ENCODE measurements at regions of chr19 and their contacts with region 1.

Region 1: DNA sequence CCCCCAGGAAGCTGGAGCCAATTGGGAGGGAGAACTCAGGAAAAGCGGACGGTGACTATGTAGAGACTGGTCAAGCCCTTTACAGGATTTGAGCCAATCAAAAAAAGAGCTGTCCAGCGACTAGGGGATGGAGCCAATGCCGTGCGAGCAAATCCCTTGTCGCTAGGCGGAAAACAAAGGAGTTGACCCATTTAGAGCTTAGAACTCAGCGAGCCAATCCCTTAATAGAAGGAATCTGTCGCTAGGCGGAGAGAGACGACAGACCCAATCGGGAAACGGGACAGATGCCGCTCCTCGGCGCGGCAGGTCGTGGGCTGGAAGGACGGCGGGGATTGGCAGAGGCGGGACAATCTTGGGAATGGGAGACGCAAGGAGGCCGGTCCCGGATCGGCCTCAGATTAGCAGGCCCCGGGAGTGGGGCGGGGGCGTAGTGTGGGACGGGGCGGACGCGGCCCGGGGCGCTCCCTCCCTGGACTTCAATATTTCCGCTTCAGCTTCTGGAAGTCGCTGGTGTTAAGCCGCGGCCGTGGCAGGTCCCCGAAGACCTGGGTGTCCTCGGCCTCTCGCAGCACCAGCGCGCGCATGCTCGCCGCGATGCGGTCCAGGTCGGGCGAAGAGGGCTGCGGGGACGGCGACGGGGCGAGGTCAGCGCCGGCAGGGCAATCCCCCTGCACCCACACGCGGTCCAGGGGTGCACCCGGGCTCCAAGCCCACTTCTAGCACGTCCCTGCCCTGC is 2.2 kb upstream of the PNKP start:
- DNase-seq: peak; percentile 92
- H3K4me3 Mint-ChIP-seq: no peak overlapping the region
- H3K27ac Mint-ChIP-seq: peak overlapping the region; percentile 86
- H3K4me1 Mint-ChIP-seq: peaks cover 27% of the 10 kb centered on the region
- H3K27me3 Mint-ChIP-seq: no peaks in the 10 kb centered on the region

Region 2: GRCh38 chr19:49653211-49653759 is 216.3 kb before region 1 on chr19:
- intact Hi-C with region 1: no loop called
- DNase-seq: no peak
- H3K4me3 Mint-ChIP-seq: no peak overlapping the region
- H3K27ac Mint-ChIP-seq: no peak overlapping the region
- H3K4me1 Mint-ChIP-seq: no peaks in the 10 kb centered on the region
- H3K27me3 Mint-ChIP-seq: no peaks in the 10 kb centered on the region

Region 3: DNA sequence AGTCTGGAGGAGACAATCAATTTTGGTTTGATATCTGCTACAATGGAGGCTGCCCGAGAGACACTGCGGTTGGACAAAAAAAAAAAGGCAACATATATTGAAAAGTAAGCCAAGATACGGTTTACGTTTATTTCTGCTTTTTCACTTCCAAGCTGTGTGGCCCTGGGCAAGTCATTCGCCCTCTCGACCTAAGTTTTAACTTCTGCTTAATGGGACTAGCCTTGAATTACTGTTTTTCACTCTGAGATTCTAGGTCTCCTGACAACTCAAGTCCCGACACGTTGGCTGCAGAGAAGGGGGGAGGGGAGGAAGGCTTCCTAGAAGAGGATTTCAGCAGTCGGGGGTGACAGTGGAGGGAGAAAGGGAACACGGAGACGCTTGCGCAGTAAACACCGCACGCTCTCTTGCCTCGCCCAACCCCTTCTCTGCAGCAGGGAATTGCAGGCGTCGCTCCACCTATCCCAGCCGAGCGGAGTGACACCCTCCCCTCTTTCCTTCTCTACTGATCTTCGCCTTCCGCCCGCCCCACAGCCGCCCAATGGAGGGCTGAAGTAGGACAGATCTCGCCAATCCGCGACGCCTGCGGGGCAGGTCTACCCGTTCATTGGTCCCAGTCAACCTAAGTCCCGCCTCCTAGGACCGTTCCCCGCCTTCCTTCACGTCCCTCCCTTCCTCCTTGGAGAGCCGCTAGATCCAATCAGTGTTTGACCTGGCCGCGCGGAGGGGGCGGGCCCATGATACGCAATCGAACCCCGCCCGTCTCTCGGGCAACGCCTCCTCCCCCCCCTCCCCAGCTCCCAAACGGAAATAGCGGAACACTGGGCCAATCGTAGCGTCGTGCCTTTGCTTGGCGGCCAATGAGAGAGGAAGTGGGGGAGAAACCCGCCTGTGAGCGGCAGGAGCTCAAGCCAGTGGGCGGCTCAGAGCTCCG is 103.3 kb before region 1 on chr19:
- intact Hi-C with region 1: loop called (anchors 1 kb)
- DNase-seq: peak; percentile 99
- H3K4me3 Mint-ChIP-seq: peak overlapping the region; percentile 91
- H3K27ac Mint-ChIP-seq: peak overlapping the region; percentile 89
- H3K4me1 Mint-ChIP-seq: peaks cover 18% of the 10 kb centered on the region
- H3K27me3 Mint-ChIP-seq: no peaks in the 10 kb centered on the region

Region 4: DNA sequence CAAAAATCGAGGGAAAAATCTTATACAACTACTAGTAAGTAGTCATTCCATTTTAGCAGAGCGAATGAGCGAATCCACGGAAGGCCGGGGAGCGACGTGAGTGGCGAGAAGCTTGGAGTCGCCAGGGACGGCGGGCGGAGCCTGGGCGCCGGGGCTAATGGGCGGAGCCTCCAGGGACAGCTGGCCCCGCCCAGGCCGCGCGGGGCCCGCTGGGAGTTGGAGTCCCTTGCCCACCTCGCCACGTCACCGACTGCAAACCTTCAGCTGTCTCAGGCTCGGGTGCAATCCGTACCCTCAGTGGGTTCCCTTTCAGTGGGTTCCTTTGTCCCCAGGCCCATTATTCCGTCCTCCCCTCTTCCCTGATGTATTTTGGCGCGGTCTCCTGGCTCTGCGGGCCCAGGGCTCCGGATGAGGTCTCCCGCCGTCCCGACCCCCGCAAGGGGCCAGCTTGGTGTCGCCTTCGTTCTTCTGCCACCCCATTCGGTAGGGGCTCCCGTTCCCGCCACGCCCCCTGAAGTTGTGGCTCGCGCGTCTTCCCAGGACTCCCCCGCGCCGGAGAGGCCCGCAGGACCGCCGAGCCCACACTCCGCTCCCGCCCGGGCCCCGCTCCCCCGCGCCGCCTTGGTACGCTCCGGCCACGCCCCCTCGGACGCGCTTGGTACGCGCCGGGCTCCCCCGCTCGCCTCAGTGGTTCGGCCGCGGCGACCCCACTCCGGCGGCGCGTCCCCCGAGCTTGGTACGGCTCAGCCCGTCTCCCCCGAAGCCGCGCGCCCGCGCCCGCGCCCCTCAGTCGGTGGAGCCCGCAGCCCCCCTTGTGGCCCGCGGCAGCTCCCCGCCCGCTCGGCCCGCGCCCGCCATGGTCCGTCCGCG is 18.9 kb before region 1 on chr19 and contains the start of gene PTOV1:
- intact Hi-C with region 1: loop called (anchors 1 kb)
- DNase-seq: peak; percentile 84
- H3K4me3 Mint-ChIP-seq: peak within 1 kb of the TSS; percentile 89
- H3K27ac Mint-ChIP-seq: peak within 1 kb of the TSS; percentile 96
- H3K4me1 Mint-ChIP-seq: peaks cover 37% of the 10 kb centered on the region
- H3K27me3 Mint-ChIP-seq: no peaks in the 10 kb centered on the region
- total RNA-seq, gene PTOV1: 127 and 134 TPM in 2 replicates

Region 5: GRCh38 chr19:49916842-49917733 is 47.5 kb after region 1 on chr19:
- intact Hi-C with region 1: no loop called
- DNase-seq: no peak
- H3K4me3 Mint-ChIP-seq: no peak overlapping the region
- H3K27ac Mint-ChIP-seq: peak overlapping the region; percentile 26
- H3K4me1 Mint-ChIP-seq: peaks cover 36% of the 10 kb centered on the region
- H3K27me3 Mint-ChIP-seq: no peaks in the 10 kb centered on the region

Region 6: GRCh38 chr19:50025024-50025789 is 155.6 kb after region 1 on chr19 and contains the start of gene VRK3:
- intact Hi-C with region 1: loop called (anchors 2 kb)
- DNase-seq: peak; percentile 98
- H3K4me3 Mint-ChIP-seq: peak within 1 kb of the TSS; percentile 91
- H3K27ac Mint-ChIP-seq: peak within 1 kb of the TSS; percentile 96
- H3K4me1 Mint-ChIP-seq: peaks cover 32% of the 10 kb centered on the region
- H3K27me3 Mint-ChIP-seq: no peaks in the 10 kb centered on the region
- total RNA-seq, gene VRK3: 60.8 and 67.7 TPM in 2 replicates

Measured in activated T-helper 2 cell treated with anti-CD3 and anti-CD28 coated beads, Interferon-gamma antibody, Interleukin-2, Interleukin-4, amounts not matched to agents 10 μg/mL and 5 μg/mL and 100 μg/mL, durations not matched to agents 14 hours and 24 hours and 36 hours (primary cell).